ENCODE measurements at regions of chr3 and their contacts with region 1.

Region 1: DNA sequence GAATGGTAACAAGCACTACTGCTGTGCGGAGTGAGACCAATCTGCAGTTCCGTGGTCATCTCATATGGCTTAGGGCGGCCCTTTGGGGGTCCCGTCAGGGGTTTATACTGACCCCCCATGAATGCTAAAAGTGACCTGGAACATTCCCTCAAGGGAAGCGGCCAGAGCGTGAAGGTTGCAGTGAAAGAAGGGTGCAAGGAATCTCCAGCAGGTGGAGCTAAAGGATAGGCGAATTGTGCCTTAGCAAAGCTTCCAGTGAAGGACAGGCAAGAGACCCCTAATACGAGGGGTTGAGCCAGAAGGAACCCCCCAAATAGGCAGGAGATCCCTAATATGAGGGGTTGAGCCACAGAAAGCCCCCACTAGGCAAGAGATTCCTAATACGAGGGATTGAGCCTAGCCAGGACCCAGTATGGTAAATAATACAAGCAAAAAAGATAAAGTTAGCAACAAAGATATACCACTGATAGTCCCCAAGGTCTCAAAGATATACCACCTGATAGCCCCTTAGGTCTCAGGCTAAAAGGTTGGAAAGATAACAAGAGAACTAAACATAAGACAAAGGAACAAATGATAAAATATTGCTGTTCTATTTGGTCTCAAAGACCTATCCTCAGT is 32.8 kb downstream of the ZNF589 start:
- DNase-seq: peak in 1 of 2 donors; percentile 55
- ATAC-seq: peak; percentile 43 to 79 (median 66)
- H3K4me3 ChIP-seq: no peak overlapping the region
- H3K27ac ChIP-seq: no peak overlapping the region
- H3K4me1 ChIP-seq: peaks cover 0 to 3% (median 0%) of the 10 kb centered on the region in 9 donors
- H3K27me3 ChIP-seq: no peaks in the 10 kb centered on the region
- CTCF ChIP-seq: peak; percentile 49 to 83 (median 80)

Region 2: GRCh38 chr3:48222616-48223513 is 50.8 kb before region 1 on chr3 and contains the start of gene CAMP:
- intact Hi-C with region 1: no loop called
- DNase-seq: peak in 1 of 2 donors; percentile 73
- ATAC-seq: peak in 7 of 8 donors; percentile 46 to 63 (median 58)
- H3K4me3 ChIP-seq: no peak within 1 kb of the TSS
- H3K27ac ChIP-seq: peak within 1 kb of the TSS in 1 of 10 donors; percentile 64
- H3K4me1 ChIP-seq: peaks cover 0 to 32% (median 0%) of the 10 kb centered on the region in 9 donors
- H3K27me3 ChIP-seq: no peaks in the 10 kb centered on the region
- CTCF ChIP-seq: no peak
- total RNA-seq, gene CAMP: 0.33 to 3.3 (median 0.42) TPM in 5 of 10 donors, not detected in the others

Region 3: GRCh38 chr3:48318783-48319468 is 45.2 kb after region 1 on chr3:
- intact Hi-C with region 1: no loop called
- DNase-seq: no peak
- ATAC-seq: no peak
- H3K4me3 ChIP-seq: no peak overlapping the region
- H3K27ac ChIP-seq: no peak overlapping the region
- H3K4me1 ChIP-seq: peaks cover 0 to 7% (median 0%) of the 10 kb centered on the region in 9 donors
- H3K27me3 ChIP-seq: peaks cover 0 to 3% (median 0%) of the 10 kb centered on the region in 7 donors
- CTCF ChIP-seq: no peak

Region 4: DNA sequence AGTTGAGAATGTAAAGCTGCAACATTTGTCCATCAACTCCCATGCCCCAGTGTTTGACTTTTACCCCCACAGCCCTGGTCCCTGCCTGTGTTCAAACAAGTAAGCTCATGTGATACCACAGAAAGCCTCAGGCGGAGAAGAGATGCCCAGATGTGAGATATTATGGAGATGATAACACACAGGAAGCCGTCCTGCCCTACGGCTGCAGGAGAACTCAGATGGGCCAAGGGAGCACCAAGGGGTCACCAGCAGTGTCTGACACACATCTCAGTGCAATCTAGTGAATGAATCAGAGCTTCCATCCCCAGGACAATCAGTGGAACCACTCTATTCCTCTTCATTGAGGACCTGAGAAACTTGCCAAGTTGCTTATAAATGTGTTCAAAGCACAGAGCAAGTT is 73.8 kb after region 1 on chr3:
- intact Hi-C with region 1: no loop called
- DNase-seq: no peak
- ATAC-seq: no peak
- H3K4me3 ChIP-seq: no peak overlapping the region
- H3K27ac ChIP-seq: no peak overlapping the region
- H3K4me1 ChIP-seq: no peaks in the 10 kb centered on the region
- H3K27me3 ChIP-seq: peaks cover 0 to 11% (median 0%) of the 10 kb centered on the region in 7 donors
- CTCF ChIP-seq: no peak

Region 5: DNA sequence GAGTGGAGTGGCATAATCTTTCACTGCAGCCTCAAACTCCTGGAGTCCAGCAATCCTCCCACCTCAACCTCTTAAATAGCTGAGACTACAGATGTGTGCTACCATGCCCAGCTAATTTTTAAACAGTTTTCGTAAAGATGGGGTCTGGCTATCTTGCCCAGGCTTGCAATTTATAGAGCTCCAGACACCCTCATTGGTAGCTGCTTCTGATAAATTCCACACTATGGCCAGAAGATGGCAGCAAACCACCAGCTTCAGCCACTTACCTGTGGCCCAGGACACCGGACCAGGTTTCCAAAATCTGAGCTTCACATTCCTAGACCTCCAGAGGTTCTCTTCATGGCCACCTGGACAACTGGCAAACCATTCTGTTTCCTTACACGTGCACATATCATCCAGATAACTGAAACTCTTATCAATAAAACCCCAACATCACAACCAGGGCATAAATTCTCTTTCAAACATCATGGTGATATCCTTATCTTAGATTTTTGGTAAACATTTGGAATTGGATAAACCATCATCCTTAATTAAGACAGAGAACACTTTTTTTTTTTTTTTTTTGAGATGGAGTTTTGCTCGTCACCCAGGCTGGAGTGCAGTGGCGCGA is 127.2 kb after region 1 on chr3:
- intact Hi-C with region 1: loop called in 4 of 10 experiments (anchors 2 to 10 kb)
- DNase-seq: peak in 1 of 2 donors; percentile 56
- ATAC-seq: peak in 7 of 8 donors; percentile 43 to 83 (median 52)
- H3K4me3 ChIP-seq: no peak overlapping the region
- H3K27ac ChIP-seq: no peak overlapping the region
- H3K4me1 ChIP-seq: peaks cover 0 to 11% (median 0%) of the 10 kb centered on the region in 9 donors
- H3K27me3 ChIP-seq: peaks cover 0 to 4% (median 0%) of the 10 kb centered on the region in 7 donors
- CTCF ChIP-seq: peak; percentile 67 to 88 (median 82)

Region 6: GRCh38 chr3:48429317-48429959 is 155.7 kb after region 1 on chr3:
- intact Hi-C with region 1: loop called in 2 of 10 experiments (anchors 2 to 5 kb)
- DNase-seq: peak; percentile 28 to 58
- ATAC-seq: peak in 5 of 8 donors; percentile 16 to 58 (median 39)
- H3K4me3 ChIP-seq: peak overlapping the region; percentile 36 to 96 (median 82)
- H3K27ac ChIP-seq: peak overlapping the region; percentile 82 to 93 (median 90)
- H3K4me1 ChIP-seq: peaks cover 29 to 54% (median 47%) of the 10 kb centered on the region in 9 donors
- H3K27me3 ChIP-seq: peaks cover 0 to 10% (median 0%) of the 10 kb centered on the region in 7 donors
- CTCF ChIP-seq: no peak

Region 7: GRCh38 chr3:48439820-48440589 is 166.3 kb after region 1 on chr3 and contains the starts of genes CCDC51 and TMA7:
- intact Hi-C with region 1: loop called in 9 of 10 experiments (anchors 1 to 5 kb)
- DNase-seq: peak; percentile 98
- ATAC-seq: peak; percentile 97 to 99 (median 99)
- H3K4me3 ChIP-seq: peak within 1 kb of the TSS; percentile 71 to 99 (median 88)
- H3K27ac ChIP-seq: peak within 1 kb of the TSS; percentile 68 to 98 (median 96)
- H3K4me1 ChIP-seq: peaks cover 0 to 36% (median 27%) of the 10 kb centered on the region in 9 donors
- H3K27me3 ChIP-seq: no peaks in the 10 kb centered on the region
- CTCF ChIP-seq: no peak
- total RNA-seq, gene CCDC51: 9.5 to 14.3 (median 12.2) TPM
- total RNA-seq, gene TMA7: 140 to 227 (median 193) TPM

Region 8: DNA sequence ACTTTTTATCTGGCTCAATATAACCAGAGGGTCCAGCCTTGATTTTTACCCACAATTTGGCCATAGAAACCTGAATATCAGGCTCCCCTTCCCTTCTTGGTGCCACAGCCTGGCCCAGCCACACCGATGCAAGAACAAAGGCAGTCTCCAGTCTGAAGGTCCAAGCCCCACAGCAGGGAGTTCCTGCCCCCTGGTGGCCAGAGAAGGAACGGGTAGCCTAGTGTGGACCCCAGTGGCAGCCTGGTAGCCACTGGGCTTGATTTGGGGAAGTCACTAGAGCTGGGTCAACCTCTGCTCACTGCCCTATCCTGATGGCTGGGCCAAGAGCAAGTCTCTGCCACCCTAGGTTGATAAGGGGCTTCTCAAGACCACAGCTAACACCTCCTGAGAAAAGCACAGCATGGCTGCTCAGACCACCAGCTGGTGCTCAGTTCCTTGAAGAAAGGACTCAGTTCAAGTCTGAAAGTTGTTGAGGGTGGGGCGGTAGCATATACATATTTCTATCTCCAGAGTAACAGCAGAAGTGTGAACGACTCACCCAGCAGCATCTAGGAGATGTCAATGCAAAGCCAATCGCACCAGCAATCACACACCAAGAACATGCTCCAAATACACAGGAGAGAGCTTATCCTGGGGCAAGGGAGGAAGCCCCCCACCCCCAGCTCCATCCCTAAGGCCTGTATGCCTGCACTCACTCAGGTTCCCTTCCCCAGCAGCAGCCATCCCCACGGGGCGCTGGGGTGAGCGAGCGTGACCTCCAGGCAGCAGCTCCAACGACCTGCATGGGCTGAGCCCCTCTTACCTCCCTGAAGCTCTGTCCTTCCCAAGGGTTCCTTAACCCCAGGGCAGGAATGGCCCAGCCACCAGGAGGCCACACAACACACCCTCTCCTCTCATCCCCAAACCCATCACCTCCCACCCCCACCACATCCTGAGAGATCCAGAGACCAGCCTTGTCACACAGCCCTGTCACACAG is 275.3 kb after region 1 on chr3:
- intact Hi-C with region 1: loop called in 7 of 10 experiments (anchors 10 kb)
- DNase-seq: peak; percentile 86 to 87
- ATAC-seq: peak; percentile 83 to 97 (median 94)
- H3K4me3 ChIP-seq: no peak overlapping the region
- H3K27ac ChIP-seq: no peak overlapping the region
- H3K4me1 ChIP-seq: peaks cover 0 to 38% (median 5%) of the 10 kb centered on the region in 9 donors
- H3K27me3 ChIP-seq: no peaks in the 10 kb centered on the region
- CTCF ChIP-seq: peak; percentile 92 to 98 (median 95)

Region 9: GRCh38 chr3:48556793-48557626 is 283.3 kb after region 1 on chr3 and contains the start of gene PFKFB4:
- intact Hi-C with region 1: loop called in 3 of 10 experiments (anchors 10 kb)
- DNase-seq: peak; percentile 99
- ATAC-seq: peak; percentile 93 to 95 (median 94)
- H3K4me3 ChIP-seq: peak within 1 kb of the TSS in 9 of 10 donors; percentile 38 to 72 (median 62)
- H3K27ac ChIP-seq: peak within 1 kb of the TSS in 9 of 10 donors; percentile 52 to 86 (median 63)
- H3K4me1 ChIP-seq: peaks cover 9 to 79% (median 29%) of the 10 kb centered on the region in 9 donors
- H3K27me3 ChIP-seq: no peaks in the 10 kb centered on the region
- CTCF ChIP-seq: peak in 2 of 9 donors; percentile 17 to 18
- total RNA-seq, gene PFKFB4: 0.40 to 7.7 (median 1.5) TPM

Region 10: DNA sequence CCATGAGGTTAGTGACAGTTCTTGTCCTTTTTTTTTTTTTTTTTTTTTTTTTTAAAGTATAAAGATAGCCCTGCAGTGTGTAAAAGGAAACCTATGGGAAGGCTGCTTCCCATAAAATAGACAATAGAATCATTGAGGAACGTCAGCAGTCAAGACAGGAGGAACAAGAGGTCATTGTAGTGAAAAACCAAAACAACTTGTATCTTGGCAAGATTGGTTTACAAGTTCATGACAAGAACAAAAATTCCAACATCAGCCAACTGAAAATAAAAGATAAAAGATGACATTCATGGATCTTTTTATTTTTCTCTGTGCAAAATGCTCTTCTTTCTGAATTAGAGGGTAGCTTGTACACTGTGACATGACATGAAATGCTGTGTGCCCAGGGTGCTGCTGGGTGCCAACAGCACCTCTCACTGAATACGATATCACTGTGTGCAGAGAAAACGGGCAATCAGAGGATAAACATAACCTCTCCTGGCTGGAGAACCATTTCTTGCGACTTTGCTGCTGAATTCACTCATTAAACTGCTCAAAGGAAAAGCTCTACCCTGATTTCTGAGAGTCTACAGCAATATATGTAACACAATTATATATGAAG is 473.4 kb after region 1 on chr3:
- intact Hi-C with region 1: no loop called
- DNase-seq: no peak
- ATAC-seq: peak in 6 of 8 donors; percentile 39 to 85 (median 60)
- H3K4me3 ChIP-seq: no peak overlapping the region
- H3K27ac ChIP-seq: peak overlapping the region; percentile 24 to 81 (median 64)
- H3K4me1 ChIP-seq: peaks cover 6 to 42% (median 26%) of the 10 kb centered on the region in 9 donors
- H3K27me3 ChIP-seq: no peaks in the 10 kb centered on the region
- CTCF ChIP-seq: no peak

Measured in heart right ventricle (tissue), 16 donors.